ENCODE measurements at regions of chr10 and their contacts with region 1.

Region 1: GRCh38 chr10:88042160-88043100 is 179.0 kb downstream of the PTEN start:
- DNase-seq: peak; percentile 72 to 76
- ATAC-seq: peak; percentile 94 to 95
- H3K4me3 ChIP-seq: peak overlapping the region in 3 of 4 donors; percentile 14 to 16 (median 16)
- H3K27ac ChIP-seq: peak overlapping the region; percentile 73 to 84 (median 80)
- H3K4me1 ChIP-seq: peaks cover 19 to 25% of the 10 kb centered on the region in 2 donors
- H3K27me3 ChIP-seq: no peaks in the 10 kb centered on the region
- CTCF ChIP-seq: no peak
- POLR2A ChIP-seq: peak in 1 of 2 donors; percentile 0

Region 2: GRCh38 chr10:88091490-88092105 is 49.2 kb after region 1 on chr10:
- in situ Hi-C with region 1: no loop called
- intact Hi-C with region 1: loop called (anchors 5 kb)
- DNase-seq: peak in 1 of 2 donors; percentile 18
- ATAC-seq: peak in 1 of 2 donors; percentile 31
- H3K4me3 ChIP-seq: no peak overlapping the region
- H3K27ac ChIP-seq: no peak overlapping the region
- H3K4me1 ChIP-seq: no peaks in the 10 kb centered on the region
- H3K27me3 ChIP-seq: no peaks in the 10 kb centered on the region
- CTCF ChIP-seq: no peak
- POLR2A ChIP-seq: no peak